Psoas muscle (tissue), 8 donors: ENCODE measurements at regions of chr5 and their contacts with region 1.

Region 1: GRCh38 chr5:135829681-135830383 is 4.6 kb upstream of the SLC25A48 start:
- DNase-seq: peak; percentile 70 to 81
- ATAC-seq: peak; percentile 58 to 66 (median 64)
- H3K4me3 ChIP-seq: no peak overlapping the region
- H3K27ac ChIP-seq: no peak overlapping the region
- H3K4me1 ChIP-seq: peaks cover 2% of the 10 kb centered on the region
- H3K27me3 ChIP-seq: peaks cover 0 to 5% (median 3%) of the 10 kb centered on the region in 3 donors
- CTCF ChIP-seq: peak; percentile 71

Region 2: GRCh38 chr5:135466178-135467050 is 363.4 kb before region 1 on chr5:
- intact Hi-C with region 1: loop called in 1 of 2 experiments (anchors 5 kb)
- DNase-seq: peak; percentile 68 to 87
- ATAC-seq: peak; percentile 92 to 99 (median 94)
- H3K4me3 ChIP-seq: peak overlapping the region; percentile 49
- H3K27ac ChIP-seq: no peak overlapping the region
- H3K4me1 ChIP-seq: no peaks in the 10 kb centered on the region
- H3K27me3 ChIP-seq: peaks cover 0 to 19% (median 0%) of the 10 kb centered on the region in 3 donors
- CTCF ChIP-seq: peak; percentile 86

Region 3: GRCh38 chr5:135560858-135561257 is 269.0 kb before region 1 on chr5:
- intact Hi-C with region 1: loop called (anchors 2 to 5 kb)
- DNase-seq: peak; percentile 72 to 81
- ATAC-seq: peak; percentile 69 to 88 (median 85)
- H3K4me3 ChIP-seq: no peak overlapping the region
- H3K27ac ChIP-seq: no peak overlapping the region
- H3K4me1 ChIP-seq: no peaks in the 10 kb centered on the region
- H3K27me3 ChIP-seq: peaks cover 0 to 18% (median 4%) of the 10 kb centered on the region in 3 donors
- CTCF ChIP-seq: peak; percentile 79